SK-N-SH (cell line): ENCODE measurements at regions of chr19 and their contacts with region 1.

Region 1: DNA sequence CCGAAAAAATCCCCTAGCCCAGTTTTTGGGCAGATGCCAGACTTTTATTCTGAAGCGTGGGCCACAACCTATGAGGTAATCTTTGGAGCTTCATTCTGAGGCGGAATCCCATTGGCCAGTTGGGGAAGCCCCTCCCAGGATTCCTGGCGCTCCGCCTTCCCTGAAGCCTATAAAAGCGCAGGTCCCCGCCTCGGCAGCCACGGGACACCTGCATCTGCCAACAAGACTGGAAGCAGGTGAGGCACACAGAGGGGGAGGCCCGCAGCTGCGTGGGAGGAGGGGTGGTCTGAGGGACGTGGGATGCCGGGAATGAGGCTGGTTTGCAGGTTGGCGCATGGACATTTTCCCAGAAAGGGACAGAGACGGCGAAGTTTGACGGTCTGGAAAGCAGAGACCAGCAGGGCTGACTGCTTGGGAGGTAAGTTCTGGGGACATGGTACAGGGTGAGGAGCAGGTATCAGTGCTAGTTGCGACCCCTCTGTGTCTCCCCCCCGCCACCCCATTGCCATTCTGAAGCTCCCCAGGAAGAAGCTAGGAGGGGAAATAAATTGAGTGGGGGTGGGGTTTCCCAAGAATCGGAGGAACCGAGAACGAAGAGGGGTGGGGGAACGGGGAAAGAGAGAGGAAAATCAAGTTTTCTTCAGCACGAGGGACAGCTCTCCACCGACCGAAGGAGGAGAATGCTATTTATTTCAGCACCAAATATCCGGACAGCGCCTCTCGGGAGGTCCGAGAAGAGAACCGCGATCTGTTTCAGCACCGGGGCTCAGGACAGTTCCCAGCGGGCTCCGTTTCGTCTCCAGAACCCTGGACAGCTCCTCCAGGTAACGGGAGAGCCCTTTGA is 22.4 kb upstream of the FEM1A start:
- DNase-seq: peak; percentile 90
- H3K4me3 ChIP-seq: peak overlapping the region in 1 of 2 experiments; percentile 41; a peak in 2 of 4 replicates
- H3K27ac ChIP-seq: peak overlapping the region in 1 of 2 experiments; percentile 36; a peak in 1 of 4 replicates
- H3K4me1 ChIP-seq: peaks cover 0 to 18% of the 10 kb centered on the region in 2 experiments; a peak in 1 of 4 replicates
- H3K27me3 ChIP-seq: no peaks in the 10 kb centered on the region
- CTCF ChIP-seq: no peak
- EP300 ChIP-seq: no peak
- RAD21 ChIP-seq: no peak

Region 2: DNA sequence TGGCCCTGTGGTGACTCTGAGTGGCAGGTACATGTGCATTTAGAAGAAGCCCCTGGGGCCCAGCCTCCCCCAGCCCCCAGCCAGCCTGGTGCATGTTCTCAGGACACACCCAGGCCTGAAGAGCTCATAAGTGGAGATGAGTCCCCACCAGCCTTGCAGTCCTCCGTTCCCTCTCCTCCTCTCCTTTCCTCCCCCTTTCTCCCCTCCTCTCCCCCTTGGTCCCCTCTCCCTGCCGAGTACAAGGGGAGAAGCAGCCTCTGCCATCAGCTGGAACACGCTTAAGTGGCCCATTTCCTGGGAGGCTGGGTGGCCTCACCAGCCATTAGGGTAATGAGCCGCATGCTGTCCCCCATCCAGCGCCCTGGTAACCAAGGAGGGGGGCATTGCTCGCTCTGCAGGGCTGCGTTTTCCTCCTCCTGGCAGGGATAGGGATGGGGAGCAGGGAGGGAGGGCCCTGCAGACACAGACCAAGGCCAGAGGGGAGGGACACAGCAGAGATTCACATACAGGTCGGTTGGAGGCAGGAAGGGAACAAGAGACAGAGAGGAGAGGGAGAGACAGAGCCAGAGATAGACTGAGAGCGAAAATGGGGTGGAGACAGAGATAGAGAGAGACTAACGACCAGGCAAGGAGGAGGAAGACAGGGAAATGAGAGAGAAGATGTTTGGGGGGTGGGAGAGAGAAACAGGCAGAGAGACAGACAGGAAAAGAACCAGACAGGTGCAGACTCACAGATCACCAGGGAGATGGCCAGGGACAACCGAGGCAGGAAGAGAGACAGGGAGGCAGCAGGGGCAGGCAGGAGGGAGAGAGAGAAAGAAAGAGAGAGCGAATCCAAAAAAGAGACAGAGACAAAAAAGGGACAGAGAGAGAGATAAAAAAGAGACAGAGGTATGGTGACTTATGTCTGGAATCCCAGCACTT is 26.2 kb before region 1 on chr19:
- CTCF ChIA-PET with region 1: interaction called, 4 read pairs
- POLR2A ChIA-PET with region 1: interaction called, 23 read pairs
- DNase-seq: peak; percentile 82
- H3K4me3 ChIP-seq: no peak overlapping the region
- H3K27ac ChIP-seq: peak overlapping the region in 1 of 2 experiments; percentile 31; a peak in 2 of 4 replicates
- H3K4me1 ChIP-seq: peaks cover 9 to 28% of the 10 kb centered on the region in 2 experiments; a peak in 2 of 4 replicates
- H3K27me3 ChIP-seq: no peaks in the 10 kb centered on the region
- CTCF ChIP-seq: no peak
- EP300 ChIP-seq: no peak
- RAD21 ChIP-seq: no peak

Region 3: GRCh38 chr19:4781801-4782200 is 12.6 kb after region 1 on chr19:
- CTCF ChIA-PET with region 1: interaction called, 4 read pairs
- POLR2A ChIA-PET with region 1: interaction called, 13 read pairs
- DNase-seq: no peak
- H3K4me3 ChIP-seq: no peak overlapping the region
- H3K27ac ChIP-seq: no peak overlapping the region
- H3K4me1 ChIP-seq: peaks cover 0 to 6% of the 10 kb centered on the region in 2 experiments; a peak in 1 of 4 replicates
- H3K27me3 ChIP-seq: no peaks in the 10 kb centered on the region
- CTCF ChIP-seq: no peak
- EP300 ChIP-seq: no peak
- RAD21 ChIP-seq: no peak

Region 4: GRCh38 chr19:4909897-4910593 is 140.9 kb after region 1 on chr19:
- CTCF ChIA-PET with region 1: no interaction called
- POLR2A ChIA-PET with region 1: no interaction called
- DNase-seq: peak; percentile 99
- H3K4me3 ChIP-seq: peak overlapping the region; percentile 62 to 82
- H3K27ac ChIP-seq: peak overlapping the region; percentile 81 to 84
- H3K4me1 ChIP-seq: peaks cover 27 to 31% of the 10 kb centered on the region in 2 experiments; a peak in 3 of 4 replicates
- H3K27me3 ChIP-seq: no peaks in the 10 kb centered on the region
- CTCF ChIP-seq: no peak
- EP300 ChIP-seq: no peak
- RAD21 ChIP-seq: no peak